Body of pancreas (tissue), 4 donors: ENCODE measurements at regions of chr3 and their contacts with region 1.

Region 1: GRCh38 chr3:73511571-73512525 is 112.9 kb downstream of the PDZRN3 start:
- DNase-seq: no peak
- ATAC-seq: no peak
- H3K4me3 ChIP-seq: no peak overlapping the region
- H3K27ac ChIP-seq: no peak overlapping the region
- H3K4me1 ChIP-seq: peaks cover 17% of the 10 kb centered on the region
- H3K27me3 ChIP-seq: no peaks in the 10 kb centered on the region
- CTCF ChIP-seq: no peak
- POLR2A ChIP-seq: no peak

Region 2: GRCh38 chr3:73379465-73379864 is 132.4 kb before region 1 on chr3:
- intact Hi-C with region 1: no loop called
- DNase-seq: no peak
- ATAC-seq: no peak
- H3K4me3 ChIP-seq: no peak overlapping the region
- H3K27ac ChIP-seq: no peak overlapping the region
- H3K4me1 ChIP-seq: no peaks in the 10 kb centered on the region
- H3K27me3 ChIP-seq: no peaks in the 10 kb centered on the region
- CTCF ChIP-seq: no peak
- POLR2A ChIP-seq: no peak

Region 3: GRCh38 chr3:73592154-73593144 is 80.6 kb after region 1 on chr3:
- intact Hi-C with region 1: no loop called
- DNase-seq: no peak
- ATAC-seq: no peak
- H3K4me3 ChIP-seq: no peak overlapping the region
- H3K27ac ChIP-seq: no peak overlapping the region
- H3K4me1 ChIP-seq: no peaks in the 10 kb centered on the region
- H3K27me3 ChIP-seq: no peaks in the 10 kb centered on the region
- CTCF ChIP-seq: no peak
- POLR2A ChIP-seq: no peak

Region 4: DNA sequence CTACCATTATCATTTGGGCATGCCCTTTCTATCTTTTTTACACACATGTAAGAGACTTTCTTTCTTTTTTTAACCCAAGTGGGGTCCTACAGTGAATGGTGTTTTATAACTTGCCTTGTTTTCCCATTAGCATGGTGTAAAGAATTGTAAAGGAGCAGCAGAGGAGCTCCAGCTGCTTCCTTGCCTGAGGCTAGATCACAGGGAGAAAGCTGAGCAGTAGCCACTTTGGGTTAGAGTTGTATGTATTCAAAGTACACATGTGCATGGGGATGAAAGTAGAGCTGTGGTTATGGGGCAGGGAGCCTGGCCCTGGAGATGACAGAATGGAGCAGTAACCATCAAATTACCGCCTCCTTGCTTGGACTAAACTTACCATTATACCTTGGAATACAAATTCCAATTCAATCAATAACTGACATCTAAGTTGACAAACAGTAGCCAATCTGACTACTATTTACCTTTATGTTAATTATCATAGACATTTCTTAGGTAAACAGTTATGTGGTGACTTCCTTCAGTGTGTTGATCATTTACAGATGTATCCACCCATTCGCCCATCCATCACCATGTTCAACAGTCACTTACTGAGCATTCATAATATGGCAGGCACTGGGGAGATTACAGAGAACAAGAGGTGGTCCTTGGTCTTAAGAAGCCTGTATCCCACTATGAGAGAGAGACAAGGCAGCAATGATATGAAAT is 344.1 kb after region 1 on chr3:
- intact Hi-C with region 1: loop called (anchors 10 kb)
- DNase-seq: no peak
- ATAC-seq: no peak
- H3K4me3 ChIP-seq: no peak overlapping the region
- H3K27ac ChIP-seq: no peak overlapping the region
- H3K4me1 ChIP-seq: no peaks in the 10 kb centered on the region
- H3K27me3 ChIP-seq: no peaks in the 10 kb centered on the region
- CTCF ChIP-seq: no peak
- POLR2A ChIP-seq: no peak

Region 5: DNA sequence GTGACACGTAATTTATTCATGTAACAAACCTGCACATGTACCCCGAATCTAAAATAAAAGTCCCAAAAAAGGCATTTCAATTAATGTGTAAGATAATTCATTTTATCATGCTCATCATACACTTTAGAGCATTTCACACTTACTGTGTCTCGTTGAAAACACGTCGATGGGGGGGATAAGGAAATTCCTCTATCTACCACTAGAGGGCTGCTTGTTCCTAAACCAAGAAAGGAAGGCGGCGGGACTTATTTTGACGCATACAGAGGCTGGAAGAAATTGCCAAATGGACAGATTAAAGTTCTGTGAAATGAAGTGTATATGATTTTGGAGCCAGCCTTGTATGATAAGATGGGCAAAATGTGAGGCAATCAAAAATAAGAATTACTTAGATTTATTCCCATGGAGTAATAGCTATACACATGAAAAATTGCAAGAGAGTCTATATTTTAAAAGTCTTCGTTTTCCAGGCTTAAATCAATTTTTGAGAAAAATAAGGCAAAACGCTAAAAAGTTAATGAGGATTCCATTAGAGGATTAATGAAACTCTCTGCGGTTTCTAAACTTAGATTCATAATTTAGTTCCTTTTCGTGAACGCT is 755.8 kb after region 1 on chr3:
- intact Hi-C with region 1: no loop called
- DNase-seq: peak; percentile 48 to 69 (median 55)
- ATAC-seq: peak; percentile 56
- H3K4me3 ChIP-seq: no peak overlapping the region
- H3K27ac ChIP-seq: no peak overlapping the region
- H3K4me1 ChIP-seq: no peaks in the 10 kb centered on the region
- H3K27me3 ChIP-seq: no peaks in the 10 kb centered on the region
- CTCF ChIP-seq: peak; percentile 58 to 85 (median 72)
- POLR2A ChIP-seq: no peak

Region 6: DNA sequence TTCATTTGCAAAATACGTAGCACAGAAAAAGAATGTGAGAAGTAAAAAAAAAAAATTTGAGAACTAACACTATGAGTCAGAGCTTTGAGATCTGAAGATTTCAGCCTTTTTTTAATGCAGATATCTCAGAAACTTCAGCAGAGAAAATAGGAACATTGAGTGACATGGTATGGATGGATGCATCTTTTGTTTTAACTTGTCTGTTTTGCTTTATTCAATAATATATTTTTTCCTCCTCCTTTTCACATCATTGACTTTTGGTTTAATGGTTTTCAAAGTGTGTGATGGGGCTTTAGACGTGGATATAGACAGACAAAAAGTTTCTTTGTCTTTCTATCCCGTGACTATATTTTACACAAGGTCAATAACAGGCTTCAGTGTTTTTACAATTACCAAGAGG is 1725.6 kb after region 1 on chr3:
- intact Hi-C with region 1: no loop called
- DNase-seq: no peak
- ATAC-seq: no peak
- H3K4me3 ChIP-seq: no peak overlapping the region
- H3K27ac ChIP-seq: no peak overlapping the region
- H3K4me1 ChIP-seq: no peaks in the 10 kb centered on the region
- H3K27me3 ChIP-seq: no peaks in the 10 kb centered on the region
- CTCF ChIP-seq: no peak
- POLR2A ChIP-seq: no peak